ENCODE measurements at regions of chr9 and their contacts with region 1.

Region 1: GRCh38 chr9:84294241-84294980 is 46.1 kb downstream of the SLC28A3 start:
- DNase-seq: no peak
- H3K4me3 ChIP-seq: no peak overlapping the region
- H3K27ac ChIP-seq: no peak overlapping the region
- H3K4me1 ChIP-seq: no peaks in the 10 kb centered on the region
- H3K27me3 ChIP-seq: no peaks in the 10 kb centered on the region
- CTCF ChIP-seq: no peak

Region 2: GRCh38 chr9:84101964-84102632 is 192.3 kb before region 1 on chr9:
- CTCF ChIA-PET with region 1: interaction called, 19 read pairs
- POLR2A ChIA-PET with region 1: no interaction called
- intact Hi-C with region 1: no loop called
- DNase-seq: no peak
- H3K4me3 ChIP-seq: no peak overlapping the region
- H3K27ac ChIP-seq: no peak overlapping the region
- H3K4me1 ChIP-seq: no peaks in the 10 kb centered on the region
- H3K27me3 ChIP-seq: no peaks in the 10 kb centered on the region
- CTCF ChIP-seq: no peak

Region 3: GRCh38 chr9:84315278-84315877 is 21.0 kb after region 1 on chr9:
- CTCF ChIA-PET with region 1: no interaction called
- POLR2A ChIA-PET with region 1: no interaction called
- intact Hi-C with region 1: loop called (anchors 2 kb)
- DNase-seq: peak; percentile 38 to 52
- H3K4me3 ChIP-seq: no peak overlapping the region
- H3K27ac ChIP-seq: no peak overlapping the region
- H3K4me1 ChIP-seq: no peaks in the 10 kb centered on the region
- H3K27me3 ChIP-seq: no peaks in the 10 kb centered on the region
- CTCF ChIP-seq: peak; percentile 91

Region 4: DNA sequence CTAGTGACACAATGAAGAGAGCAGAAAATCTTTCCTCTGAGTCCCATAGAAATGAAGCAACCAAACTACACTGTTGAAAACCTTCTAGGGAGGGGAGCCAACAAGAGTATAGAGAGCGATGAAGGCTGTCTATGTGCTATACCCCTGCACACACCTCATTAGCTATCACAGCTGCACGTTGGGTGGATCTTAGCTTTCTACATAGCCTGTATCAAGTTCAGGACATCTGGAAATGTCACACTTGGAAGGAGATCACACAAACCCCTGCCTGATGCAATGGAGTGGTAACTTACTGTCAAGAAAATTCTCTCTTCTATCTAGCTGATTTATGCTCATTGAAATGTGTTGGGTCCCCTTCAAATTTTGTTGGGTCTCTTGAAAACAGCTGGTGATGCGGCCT is 248.1 kb after region 1 on chr9:
- CTCF ChIA-PET with region 1: no interaction called
- POLR2A ChIA-PET with region 1: no interaction called
- intact Hi-C with region 1: no loop called
- DNase-seq: no peak
- H3K4me3 ChIP-seq: no peak overlapping the region
- H3K27ac ChIP-seq: no peak overlapping the region
- H3K4me1 ChIP-seq: no peaks in the 10 kb centered on the region
- H3K27me3 ChIP-seq: peaks cover 25% of the 10 kb centered on the region; the same call in 1 of the 2 replicates
- CTCF ChIP-seq: no peak